ENCODE measurements at regions of chr5 and their contacts with region 1.

Region 1: DNA sequence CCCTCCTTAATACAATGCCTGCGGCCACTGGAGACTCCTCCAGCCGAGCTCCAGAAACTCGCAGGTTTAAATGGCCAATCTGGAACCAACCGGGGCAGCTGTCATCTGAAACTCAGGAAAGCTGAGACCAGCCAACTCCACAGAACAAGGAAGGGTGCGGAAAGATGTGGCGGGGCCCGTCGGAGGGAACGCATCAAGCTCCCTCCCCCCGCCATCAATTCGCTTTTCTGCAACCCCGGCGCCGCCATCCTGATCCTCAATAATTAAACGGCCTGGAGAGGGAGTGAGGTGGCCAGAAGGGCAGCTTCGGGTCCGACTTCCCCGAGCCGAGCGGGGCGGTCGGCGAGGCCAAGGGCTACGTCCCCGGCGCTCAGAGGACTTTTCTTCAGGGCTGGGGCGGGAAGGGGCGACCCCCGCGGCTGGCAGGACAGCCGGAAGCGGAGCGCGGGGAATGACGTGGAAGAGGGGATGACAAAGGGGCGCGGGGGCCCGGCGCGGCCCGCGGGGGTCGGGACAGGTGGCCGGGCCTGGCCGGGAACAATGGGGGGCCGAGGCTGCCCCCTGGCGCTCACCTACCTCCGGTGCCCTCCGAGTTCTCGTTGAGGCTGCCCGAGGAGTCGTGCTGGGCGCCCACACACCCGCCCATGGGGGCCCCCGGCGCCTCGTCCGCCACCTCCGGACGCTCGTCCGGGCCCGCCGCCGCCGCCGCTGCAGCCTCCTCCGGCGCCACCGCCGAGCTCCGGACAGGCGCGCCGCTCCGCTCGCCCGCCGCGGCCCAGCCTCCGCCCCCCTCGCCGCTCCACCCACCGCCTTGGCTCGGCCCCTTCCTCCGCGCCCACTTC is at the start of gene UBTD2:
- DNase-seq: peak; percentile 92
- ATAC-seq: peak; percentile 79
- total RNA-seq, gene UBTD2: 29.2 TPM

Region 2: DNA sequence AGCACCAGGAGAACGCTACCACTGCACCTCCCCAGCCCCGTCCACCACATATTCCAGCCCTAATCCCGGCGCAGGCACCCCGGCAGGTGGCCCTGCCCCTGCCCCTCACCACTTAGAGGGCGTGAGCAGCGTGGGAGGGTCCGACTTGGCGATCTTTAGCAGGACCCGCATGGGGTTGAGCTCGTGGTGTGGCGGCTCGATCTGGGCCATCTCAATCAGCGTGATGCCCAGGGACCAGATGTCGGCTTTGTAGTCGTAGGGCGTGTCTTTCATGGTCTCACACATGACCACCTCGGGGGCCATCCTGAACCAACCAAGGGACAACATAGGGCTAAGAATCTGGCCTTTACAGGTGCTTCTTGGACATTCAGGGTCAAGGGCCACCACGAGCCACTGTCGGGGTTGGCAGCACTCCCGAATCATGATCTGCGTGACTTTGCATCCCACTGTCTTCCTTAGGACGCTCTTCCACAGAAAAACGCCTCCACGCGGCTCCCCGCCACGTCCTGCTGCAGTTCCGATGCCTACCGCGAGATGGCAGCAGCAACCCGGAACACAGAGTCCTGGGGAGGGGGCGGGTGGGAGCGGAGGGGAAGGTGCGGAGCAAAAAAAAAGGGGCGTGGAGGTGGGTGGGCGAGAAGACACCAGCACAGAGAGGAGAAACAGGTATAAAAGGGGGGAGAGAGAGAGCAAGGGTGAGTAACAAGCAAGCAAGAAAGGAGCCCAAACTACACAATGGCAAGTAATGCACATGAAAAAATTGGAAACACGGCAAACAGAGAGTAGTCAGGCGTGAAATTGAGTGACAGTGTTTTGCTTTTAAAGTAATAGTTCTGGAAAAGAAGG is 176.5 kb before region 1 on chr5:
- intact Hi-C with region 1: loop called (anchors 10 kb)
- DNase-seq: peak; percentile 83
- ATAC-seq: peak; percentile 66

Region 3: DNA sequence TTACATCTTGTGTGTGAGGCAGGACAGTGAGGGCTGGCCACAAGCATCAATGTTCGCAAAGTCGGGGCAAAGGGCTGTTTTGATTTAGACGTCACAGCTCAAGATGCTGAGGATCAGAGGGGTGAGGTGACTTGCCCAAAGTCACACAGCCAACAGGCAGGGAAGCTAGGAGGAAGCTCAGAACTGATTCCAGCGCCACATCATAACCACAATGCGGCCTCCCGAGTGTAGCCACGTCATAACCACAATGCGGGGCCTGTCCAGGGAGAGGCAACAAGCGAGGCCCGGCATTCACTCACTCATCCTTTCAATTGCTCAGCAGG is 109.4 kb before region 1 on chr5:
- intact Hi-C with region 1: no loop called
- DNase-seq: no peak
- ATAC-seq: no peak

Region 4: DNA sequence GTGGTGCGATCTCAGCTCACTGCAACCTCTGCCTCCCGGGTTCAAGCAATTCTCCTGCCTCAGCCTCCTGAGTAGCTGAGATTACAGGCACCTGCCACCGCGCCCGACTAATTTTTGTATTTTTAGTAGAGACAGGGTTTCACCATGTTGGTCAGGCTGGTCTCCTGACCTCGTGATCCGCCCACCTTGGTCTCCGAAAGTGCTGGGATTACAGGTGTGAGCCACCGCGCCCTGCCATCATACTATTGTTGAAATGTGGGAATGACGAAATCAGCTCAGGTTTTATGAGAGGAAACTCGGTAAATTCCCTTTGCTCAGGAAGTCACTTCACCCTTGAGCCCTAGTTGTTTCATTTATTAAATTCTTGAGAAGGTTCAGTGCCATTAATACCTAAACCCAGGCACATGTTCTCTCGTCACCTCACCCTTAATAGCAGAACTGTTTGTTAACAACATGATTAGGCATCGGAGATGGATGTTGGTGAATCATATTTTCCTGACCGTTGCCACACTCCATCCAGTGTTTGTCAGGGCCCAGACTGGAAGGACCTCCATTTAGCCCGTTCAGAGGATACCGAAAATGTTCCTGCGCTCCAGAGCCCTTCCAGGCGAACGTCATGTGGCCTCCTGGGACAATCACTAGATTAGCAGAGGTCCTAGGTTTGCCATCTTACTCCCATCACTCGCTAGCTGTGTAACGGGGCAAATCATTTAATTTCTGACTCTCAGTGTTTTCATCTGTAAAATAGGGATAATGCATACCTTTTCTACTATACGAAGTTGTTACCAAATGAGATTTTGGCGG is 752.9 kb after region 1 on chr5:
- intact Hi-C with region 1: loop called (anchors 5 kb)
- DNase-seq: no peak
- ATAC-seq: no peak

Region 5: GRCh38 chr5:173412566-173412965 is 1129.3 kb after region 1 on chr5:
- intact Hi-C with region 1: no loop called
- DNase-seq: no peak
- ATAC-seq: peak; percentile 30

Measured in sciatic nerve (tissue), 2 donors.